HEK293 (cell line): ENCODE measurements at regions of chr11 and their contacts with region 1.

Region 1: DNA sequence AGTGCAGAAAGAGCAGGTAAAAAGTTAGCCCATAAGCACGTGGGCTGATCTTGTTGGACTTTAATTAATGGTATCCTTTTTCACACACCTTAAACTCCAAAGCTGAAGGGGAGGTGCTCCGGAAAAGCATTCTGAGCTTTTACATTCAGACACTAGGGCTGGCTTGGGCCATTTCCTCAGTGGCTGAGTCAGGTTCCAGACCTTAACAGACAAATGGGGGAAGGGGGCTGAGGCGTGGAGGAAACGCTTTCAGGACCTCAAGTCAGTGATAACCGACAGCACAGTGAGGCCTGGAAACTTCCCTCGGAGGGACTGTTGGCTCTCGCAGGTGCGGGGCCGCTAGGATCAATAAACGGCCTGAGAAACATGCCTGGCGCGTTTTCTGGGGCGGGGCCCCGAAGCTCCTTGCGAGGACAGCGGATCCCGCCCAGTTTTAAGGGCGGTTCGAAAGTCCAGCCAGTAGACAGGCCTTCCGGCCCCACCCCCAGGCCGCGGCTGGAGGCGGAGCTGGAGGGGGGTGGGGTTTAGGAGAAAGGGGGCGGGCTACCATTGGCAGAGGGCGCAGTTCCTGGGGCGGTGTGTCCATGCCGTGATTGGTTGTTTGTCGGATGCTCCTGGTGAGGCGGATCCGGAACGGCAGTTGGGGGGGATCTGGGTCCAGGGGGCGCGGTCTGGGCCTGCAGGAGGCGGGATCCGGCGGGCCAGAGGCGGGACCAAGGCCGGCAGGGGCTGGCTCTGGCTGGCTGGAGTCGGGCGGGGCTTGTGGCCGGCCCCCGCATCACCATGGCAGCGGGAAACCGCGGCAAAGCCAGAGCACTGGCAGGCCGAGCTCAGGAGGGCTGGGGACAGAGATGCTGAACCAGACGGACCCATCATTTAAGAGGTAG is 8.0 kb downstream of the C11orf52 start:
- H3K4me3 ChIP-seq: peak overlapping the region; percentile 30
- H3K27ac ChIP-seq: no peak overlapping the region
- H3K4me1 ChIP-seq: no peaks in the 10 kb centered on the region
- CTCF ChIP-seq: no peak

Region 2: GRCh38 chr11:111788051-111788450 is 138.7 kb before region 1 on chr11:
- CTCF ChIA-PET with region 1: no interaction called
- POLR2A ChIA-PET with region 1: no interaction called
- H3K4me3 ChIP-seq: no peak overlapping the region
- H3K27ac ChIP-seq: no peak overlapping the region
- H3K4me1 ChIP-seq: no peaks in the 10 kb centered on the region
- CTCF ChIP-seq: no peak

Region 3: DNA sequence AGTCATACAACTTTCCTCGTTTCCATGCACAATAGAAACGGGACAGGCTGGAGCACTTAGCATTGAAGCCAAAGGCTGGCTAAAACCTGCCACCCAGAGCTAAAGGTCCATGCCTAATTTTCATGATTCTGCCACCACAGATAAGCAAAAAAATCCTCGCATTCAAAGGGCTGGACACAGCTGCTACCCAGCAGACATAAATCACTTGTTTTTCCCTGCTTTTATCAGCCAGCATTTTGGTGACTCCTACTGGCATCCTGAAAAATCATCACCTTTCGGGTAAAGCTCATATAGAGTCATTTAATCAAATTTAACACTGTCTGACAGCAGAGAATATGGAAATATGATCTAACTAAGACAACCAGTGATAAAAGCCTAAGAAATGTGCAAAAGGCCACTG is 93.2 kb before region 1 on chr11:
- CTCF ChIA-PET with region 1: no interaction called
- POLR2A ChIA-PET with region 1: no interaction called
- H3K4me3 ChIP-seq: no peak overlapping the region
- H3K27ac ChIP-seq: no peak overlapping the region
- H3K4me1 ChIP-seq: no peaks in the 10 kb centered on the region
- CTCF ChIP-seq: no peak

Region 4: DNA sequence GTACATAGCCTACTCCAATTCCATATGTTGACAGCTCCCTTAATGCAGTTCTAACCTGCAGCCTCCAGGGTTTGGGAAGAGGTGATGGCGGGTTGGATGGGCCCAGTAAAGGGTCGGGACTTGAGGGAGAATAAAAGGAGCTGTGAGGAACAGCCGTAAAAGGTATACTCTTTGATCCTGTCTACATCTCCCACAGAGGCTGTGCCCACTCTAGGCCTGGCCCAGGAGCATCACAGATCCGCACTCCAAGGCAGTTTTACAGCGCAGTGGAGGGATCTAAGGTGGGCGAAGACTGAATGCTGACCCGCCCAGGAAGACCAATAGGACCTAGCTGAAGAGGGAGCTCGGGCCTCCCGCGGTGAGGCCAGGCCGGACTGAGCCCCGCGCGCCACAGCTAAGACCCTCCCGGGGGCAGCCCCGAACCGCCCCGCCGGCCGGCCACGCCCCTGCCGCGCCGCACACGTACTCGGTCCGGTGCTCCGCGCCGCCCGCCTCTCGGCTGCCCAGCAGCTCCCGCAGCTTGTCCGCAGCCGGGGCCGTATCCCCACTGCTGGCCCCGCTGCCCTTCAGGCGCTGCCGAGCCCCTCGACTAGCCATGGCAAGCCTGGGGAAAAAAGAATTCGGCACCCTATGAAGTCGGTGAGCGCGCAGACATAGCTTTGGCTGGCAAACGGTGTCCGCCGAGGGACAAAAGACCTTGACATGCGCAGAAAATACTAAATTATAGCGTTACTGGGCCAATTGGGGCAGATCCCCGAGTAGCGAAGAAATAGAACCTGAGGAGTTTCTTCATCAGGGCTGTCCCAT is 55.7 kb before region 1 on chr11 and contains the start of gene ALG9:
- CTCF ChIA-PET with region 1: interaction called, 5 read pairs
- POLR2A ChIA-PET with region 1: interaction called, 18 read pairs
- H3K4me3 ChIP-seq: peak within 1 kb of the TSS; percentile 89
- H3K27ac ChIP-seq: peak within 1 kb of the TSS; percentile 66; the same call in 1 of the 2 replicates
- H3K4me1 ChIP-seq: no peaks in the 10 kb centered on the region
- CTCF ChIP-seq: peak; percentile 44; the same call in 1 of the 2 replicates

Region 5: GRCh38 chr11:111938687-111939160 is 12.0 kb after region 1 on chr11:
- CTCF ChIA-PET with region 1: interaction called, 14 read pairs
- POLR2A ChIA-PET with region 1: interaction called, 15 read pairs
- H3K4me3 ChIP-seq: no peak overlapping the region
- H3K27ac ChIP-seq: no peak overlapping the region
- H3K4me1 ChIP-seq: peaks cover 2% of the 10 kb centered on the region; the same call in 1 of the 2 replicates
- CTCF ChIP-seq: no peak

Region 6: DNA sequence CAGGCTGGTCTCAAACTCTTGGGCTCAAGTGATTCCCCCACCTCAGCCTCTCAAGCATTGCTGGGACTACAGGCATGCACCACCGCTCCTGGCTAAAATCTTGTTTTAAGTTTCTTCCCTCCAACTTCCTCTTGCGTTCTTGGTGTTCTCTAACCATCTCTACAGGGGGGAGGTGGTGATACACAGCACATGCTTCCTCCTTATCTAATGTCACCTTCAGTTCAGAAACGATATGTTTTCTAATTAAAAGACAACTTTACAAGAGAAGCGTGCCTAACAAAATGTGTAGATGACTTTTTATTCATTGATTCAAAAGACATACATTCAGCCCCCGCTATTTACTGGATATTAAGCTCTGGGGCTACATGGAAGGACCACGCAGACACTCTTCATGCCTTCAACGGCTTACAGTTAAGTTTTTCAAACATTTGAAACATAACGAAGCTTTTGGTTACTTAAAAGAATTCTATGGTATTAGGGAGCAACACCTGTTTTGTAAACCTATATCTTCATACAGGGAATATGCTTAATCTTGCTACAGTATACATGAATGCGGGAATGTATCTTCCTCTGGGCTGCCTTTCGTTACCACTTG is 97.5 kb after region 1 on chr11:
- CTCF ChIA-PET with region 1: interaction called, 10 read pairs
- POLR2A ChIA-PET with region 1: interaction called, 3 read pairs
- H3K4me3 ChIP-seq: peak overlapping the region; percentile 98
- H3K27ac ChIP-seq: peak overlapping the region; percentile 77; the same call in 1 of the 2 replicates
- H3K4me1 ChIP-seq: no peaks in the 10 kb centered on the region
- CTCF ChIP-seq: no peak